CD8-positive, alpha-beta memory T cell (primary cell): ENCODE measurements at regions of chr16 and their contacts with region 1.

Region 1: DNA sequence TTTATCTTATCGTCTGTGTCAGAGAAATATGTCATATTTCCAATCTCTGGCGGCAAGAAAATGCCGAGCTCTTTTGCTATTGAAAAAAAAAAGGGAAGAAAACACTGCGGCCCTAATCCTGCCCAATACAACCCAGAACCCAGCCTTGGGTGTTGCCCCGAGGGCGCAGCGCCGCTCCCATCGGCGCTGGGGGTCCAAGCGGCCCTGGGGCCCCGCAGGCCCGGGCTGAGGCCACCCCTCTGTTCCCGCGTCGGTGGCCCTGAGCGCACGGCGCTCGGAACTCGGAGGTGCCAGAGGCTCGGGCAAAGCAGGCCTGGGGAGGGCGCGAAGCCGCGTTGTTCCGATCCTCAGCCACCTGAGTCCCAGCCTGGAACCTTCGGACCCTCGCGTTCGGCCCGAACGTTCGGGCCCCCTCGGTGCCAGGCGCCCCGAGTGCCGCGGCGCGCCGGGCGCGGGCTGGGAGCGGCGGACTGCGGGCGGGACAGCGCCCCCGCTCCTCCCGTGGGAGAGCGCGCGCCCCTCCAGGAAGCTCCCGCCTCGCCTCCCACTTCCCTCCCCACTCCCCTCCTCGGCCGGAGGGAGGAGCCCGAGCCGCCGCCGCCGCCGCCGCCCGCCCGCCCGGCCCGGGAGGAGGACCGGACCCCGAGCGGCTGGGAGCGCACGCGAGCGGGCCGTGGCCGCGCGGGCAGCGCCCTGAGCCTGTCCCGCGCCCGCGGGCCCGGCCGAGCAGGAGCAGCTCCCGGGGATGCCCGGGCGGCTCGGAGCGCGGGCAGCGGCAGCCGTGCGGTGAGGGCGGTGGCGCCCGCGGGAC is at the start of gene CPNE2:
- DNase-seq: peak in 1 of 5 donors; percentile 21
- H3K4me3 ChIP-seq: peak within 1 kb of the TSS; percentile 54
- H3K4me3 Mint-ChIP-seq: peak within 1 kb of the TSS; percentile 72 to 92 (median 82)
- H3K27ac ChIP-seq: peak within 1 kb of the TSS; percentile 43
- H3K27ac Mint-ChIP-seq: peak within 1 kb of the TSS in 5 of 8 donors; percentile 10 to 93 (median 33)
- H3K4me1 ChIP-seq: peaks cover 6% of the 10 kb centered on the region
- H3K4me1 Mint-ChIP-seq: peaks cover 4 to 20% (median 9%) of the 10 kb centered on the region in 3 donors
- H3K27me3 ChIP-seq: no peaks in the 10 kb centered on the region
- H3K27me3 Mint-ChIP-seq: peaks cover 0 to 5% of the 10 kb centered on the region in 2 donors
- total RNA-seq, gene CPNE2: 9.4 TPM

Region 2: GRCh38 chr16:56683424-56684172 is 408.6 kb before region 1 on chr16:
- CTCF ChIA-PET with region 1: no interaction called
- POLR2A ChIA-PET with region 1: interaction called, 10 read pairs
- DNase-seq: no peak
- H3K4me3 ChIP-seq: peak overlapping the region; percentile 86
- H3K4me3 Mint-ChIP-seq: peak overlapping the region; percentile 94 to 98 (median 97)
- H3K27ac ChIP-seq: no peak overlapping the region
- H3K27ac Mint-ChIP-seq: peak overlapping the region in 5 of 8 donors; percentile 41 to 90 (median 66)
- H3K4me1 ChIP-seq: peaks cover 17% of the 10 kb centered on the region
- H3K4me1 Mint-ChIP-seq: peaks cover 26 to 29% (median 27%) of the 10 kb centered on the region in 3 donors
- H3K27me3 ChIP-seq: no peaks in the 10 kb centered on the region
- H3K27me3 Mint-ChIP-seq: no peaks in the 10 kb centered on the region

Region 3: GRCh38 chr16:57112403-57113041 is 20.3 kb after region 1 on chr16:
- CTCF ChIA-PET with region 1: no interaction called
- POLR2A ChIA-PET with region 1: no interaction called
- DNase-seq: no peak
- H3K4me3 ChIP-seq: no peak overlapping the region
- H3K4me3 Mint-ChIP-seq: no peak overlapping the region
- H3K27ac ChIP-seq: no peak overlapping the region
- H3K27ac Mint-ChIP-seq: peak overlapping the region in 1 of 8 donors; percentile 78
- H3K4me1 ChIP-seq: no peaks in the 10 kb centered on the region
- H3K4me1 Mint-ChIP-seq: no peaks in the 10 kb centered on the region
- H3K27me3 ChIP-seq: no peaks in the 10 kb centered on the region
- H3K27me3 Mint-ChIP-seq: no peaks in the 10 kb centered on the region

Region 4: GRCh38 chr16:57128771-57129389 is 36.7 kb after region 1 on chr16:
- CTCF ChIA-PET with region 1: interaction called, 22 read pairs
- POLR2A ChIA-PET with region 1: interaction called, 4 read pairs
- DNase-seq: peak; percentile 36 to 84 (median 68)
- H3K4me3 ChIP-seq: peak overlapping the region; percentile 33
- H3K4me3 Mint-ChIP-seq: peak overlapping the region; percentile 65 to 92 (median 89)
- H3K27ac ChIP-seq: peak overlapping the region; percentile 35
- H3K27ac Mint-ChIP-seq: peak overlapping the region; percentile 83 to 98 (median 94)
- H3K4me1 ChIP-seq: peaks cover 91% of the 10 kb centered on the region
- H3K4me1 Mint-ChIP-seq: peaks cover 89 to 99% (median 95%) of the 10 kb centered on the region in 3 donors
- H3K27me3 ChIP-seq: no peaks in the 10 kb centered on the region
- H3K27me3 Mint-ChIP-seq: no peaks in the 10 kb centered on the region

Region 5: DNA sequence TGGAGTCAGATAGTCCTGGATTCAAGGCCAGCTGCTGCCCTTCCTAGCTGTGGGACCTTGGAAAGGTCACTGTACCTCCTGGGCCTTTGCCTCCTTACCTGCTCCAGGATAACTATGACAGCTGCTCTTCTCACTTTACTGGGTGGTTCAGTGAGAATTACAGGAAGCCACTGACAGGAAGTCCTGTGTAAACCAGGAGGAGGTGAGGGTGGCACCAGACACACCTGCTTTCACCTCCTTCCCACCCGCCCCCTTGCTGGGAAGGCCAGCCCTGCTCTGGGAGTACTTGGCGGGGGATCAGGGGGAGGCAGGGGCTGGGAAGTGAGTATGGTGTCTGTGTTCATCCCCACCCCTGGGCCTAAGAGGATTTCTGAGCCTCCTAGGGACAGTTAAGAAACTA is 42.8 kb after region 1 on chr16:
- CTCF ChIA-PET with region 1: interaction called, 22 read pairs
- POLR2A ChIA-PET with region 1: interaction called, 6 read pairs
- DNase-seq: peak in 3 of 5 donors; percentile 27 to 57 (median 49)
- H3K4me3 ChIP-seq: peak overlapping the region; percentile 78
- H3K4me3 Mint-ChIP-seq: peak overlapping the region; percentile 84 to 96 (median 90)
- H3K27ac ChIP-seq: peak overlapping the region; percentile 60
- H3K27ac Mint-ChIP-seq: peak overlapping the region; percentile 83 to 98 (median 93)
- H3K4me1 ChIP-seq: peaks cover 68% of the 10 kb centered on the region
- H3K4me1 Mint-ChIP-seq: peaks cover 78 to 95% (median 84%) of the 10 kb centered on the region in 3 donors
- H3K27me3 ChIP-seq: no peaks in the 10 kb centered on the region
- H3K27me3 Mint-ChIP-seq: no peaks in the 10 kb centered on the region